ENCODE measurements at regions of chr18 and their contacts with region 1.

Region 1: GRCh38 chr18:37385846-37386778 is 179.5 kb downstream of the CELF4 start:
- DNase-seq: no peak
- H3K4me3 ChIP-seq: no peak overlapping the region
- H3K27ac ChIP-seq: no peak overlapping the region
- H3K4me1 ChIP-seq: peaks cover 0 to 11% (median 8%) of the 10 kb centered on the region in 4 experiments; a peak in 6 of 7 replicates
- H3K27me3 ChIP-seq: no peaks in the 10 kb centered on the region; a peak in 1 of 7 replicates
- CTCF ChIP-seq: peak in 2 of 3 experiments; percentile 33 to 43; a peak in 2 of 4 replicates
- EP300 ChIP-seq: no peak
- POLR2A ChIP-seq: no peak
- RAD21 ChIP-seq: peak; percentile 69 to 77

Region 2: DNA sequence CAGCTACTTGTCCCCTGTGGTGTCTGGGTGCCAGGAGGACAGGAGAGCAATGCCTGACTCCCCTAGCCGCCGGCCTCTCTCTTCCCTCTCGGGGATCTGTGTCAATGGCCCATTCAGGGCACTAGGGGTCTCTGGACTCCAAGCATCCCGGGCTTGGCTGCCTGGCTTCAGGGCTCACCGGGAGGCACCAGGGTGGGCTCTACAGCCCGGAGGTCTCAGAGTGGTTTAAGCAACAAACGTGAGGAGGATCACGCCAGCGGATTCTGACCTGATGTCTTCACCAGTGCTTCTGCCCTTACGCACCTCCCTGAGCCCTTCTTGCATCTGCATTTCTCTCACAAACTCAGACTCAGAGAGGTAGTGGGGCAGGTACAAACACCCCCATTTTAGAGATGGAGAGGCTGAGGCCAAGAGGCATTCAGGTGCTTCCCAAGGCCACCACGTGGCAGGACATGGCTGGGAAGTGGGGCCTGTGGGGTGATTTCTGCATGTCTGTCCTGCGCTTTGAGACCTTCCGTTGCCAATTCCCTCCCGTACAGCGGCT is 63.5 kb before region 1 on chr18:
- CTCF ChIA-PET with region 1: interaction called, 12 read pairs
- POLR2A ChIA-PET with region 1: no interaction called
- DNase-seq: peak; percentile 29 to 85
- H3K4me3 ChIP-seq: no peak overlapping the region
- H3K27ac ChIP-seq: no peak overlapping the region
- H3K4me1 ChIP-seq: peaks cover 0 to 10% (median 5%) of the 10 kb centered on the region in 4 experiments; a peak in 6 of 7 replicates
- H3K27me3 ChIP-seq: no peaks in the 10 kb centered on the region
- CTCF ChIP-seq: peak in 2 of 3 experiments; percentile 83 to 92; a peak in 3 of 4 replicates
- EP300 ChIP-seq: no peak
- POLR2A ChIP-seq: no peak
- RAD21 ChIP-seq: peak; percentile 87 to 92

Region 3: GRCh38 chr18:37355772-37356171 is 30.3 kb before region 1 on chr18:
- CTCF ChIA-PET with region 1: interaction called, 15 read pairs
- POLR2A ChIA-PET with region 1: no interaction called
- DNase-seq: no peak
- H3K4me3 ChIP-seq: no peak overlapping the region
- H3K27ac ChIP-seq: no peak overlapping the region
- H3K4me1 ChIP-seq: peaks cover 2 to 3% (median 2%) of the 10 kb centered on the region in 4 experiments; a peak in 4 of 7 replicates
- H3K27me3 ChIP-seq: peaks cover 0 to 22% (median 16%) of the 10 kb centered on the region in 4 experiments; a peak in 6 of 7 replicates
- CTCF ChIP-seq: no peak
- EP300 ChIP-seq: no peak
- POLR2A ChIP-seq: no peak
- RAD21 ChIP-seq: no peak

Region 4: DNA sequence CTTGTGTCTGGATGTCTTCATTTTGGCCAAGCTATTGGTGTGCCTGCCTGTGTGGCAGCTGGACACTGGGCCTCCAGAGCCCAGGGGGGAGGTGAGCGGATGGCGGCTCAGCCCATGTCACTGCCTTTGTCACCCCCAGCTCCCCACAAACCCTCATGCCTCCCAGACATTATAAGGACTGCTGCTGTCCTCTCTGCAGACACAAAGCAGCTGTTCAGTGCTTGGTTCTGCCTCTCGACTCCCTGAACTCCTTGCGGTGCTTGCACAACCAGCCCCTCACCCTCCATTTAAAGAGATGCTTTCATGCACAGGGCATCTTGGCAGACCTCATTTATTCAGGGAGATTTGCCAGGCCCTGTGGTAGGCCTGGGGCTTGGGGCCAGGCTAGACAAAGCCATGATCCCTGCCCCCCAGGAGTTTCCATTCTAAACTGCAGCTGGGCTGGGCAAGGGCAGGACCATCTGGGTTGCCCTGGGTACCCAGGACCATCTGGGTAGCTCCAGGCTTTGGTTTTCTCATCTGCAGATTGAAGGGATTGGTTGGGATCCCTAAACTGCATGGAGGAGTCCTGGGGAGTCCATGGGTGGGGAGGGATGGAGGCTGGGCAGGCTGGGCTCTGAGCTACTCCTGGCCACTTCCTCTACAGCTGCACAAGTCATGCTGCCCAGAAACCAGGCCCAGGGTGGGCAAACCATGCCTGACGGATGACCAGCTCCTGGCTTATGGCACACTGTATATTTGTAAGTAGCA is 11.0 kb after region 1 on chr18:
- CTCF ChIA-PET with region 1: interaction called, 11 read pairs
- POLR2A ChIA-PET with region 1: no interaction called
- DNase-seq: no peak
- H3K4me3 ChIP-seq: no peak overlapping the region
- H3K27ac ChIP-seq: no peak overlapping the region
- H3K4me1 ChIP-seq: peaks cover 0 to 16% (median 12%) of the 10 kb centered on the region in 4 experiments; a peak in 6 of 7 replicates
- H3K27me3 ChIP-seq: peaks cover 4 to 33% (median 20%) of the 10 kb centered on the region in 4 experiments
- CTCF ChIP-seq: no peak
- EP300 ChIP-seq: no peak
- POLR2A ChIP-seq: no peak
- RAD21 ChIP-seq: no peak

Region 5: DNA sequence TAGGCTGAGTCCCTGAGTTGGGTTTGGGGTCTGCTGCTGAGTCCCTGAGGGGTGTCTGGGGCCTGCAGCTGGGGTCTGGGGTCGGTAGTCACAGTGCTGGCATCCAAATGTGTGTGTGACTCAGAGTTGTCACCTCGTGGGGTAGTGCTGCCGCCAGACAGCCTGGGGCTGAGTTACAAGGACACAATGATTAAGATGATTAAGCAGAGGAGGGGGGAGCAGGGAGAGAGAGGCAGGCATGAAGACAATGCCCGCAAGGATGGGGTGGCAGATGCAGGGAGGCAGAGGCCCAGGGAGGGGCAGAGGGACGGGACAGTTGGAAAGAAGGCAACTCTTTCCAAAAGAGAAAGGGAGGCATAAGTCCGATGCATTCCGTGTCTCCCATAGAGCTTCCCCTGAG is 59.3 kb after region 1 on chr18:
- CTCF ChIA-PET with region 1: interaction called, 31 read pairs
- POLR2A ChIA-PET with region 1: no interaction called
- DNase-seq: no peak
- H3K4me3 ChIP-seq: no peak overlapping the region
- H3K27ac ChIP-seq: no peak overlapping the region
- H3K4me1 ChIP-seq: peaks cover 0 to 16% (median 10%) of the 10 kb centered on the region in 4 experiments; a peak in 6 of 7 replicates
- H3K27me3 ChIP-seq: no peaks in the 10 kb centered on the region
- CTCF ChIP-seq: no peak
- EP300 ChIP-seq: no peak
- POLR2A ChIP-seq: no peak
- RAD21 ChIP-seq: no peak

Region 6: DNA sequence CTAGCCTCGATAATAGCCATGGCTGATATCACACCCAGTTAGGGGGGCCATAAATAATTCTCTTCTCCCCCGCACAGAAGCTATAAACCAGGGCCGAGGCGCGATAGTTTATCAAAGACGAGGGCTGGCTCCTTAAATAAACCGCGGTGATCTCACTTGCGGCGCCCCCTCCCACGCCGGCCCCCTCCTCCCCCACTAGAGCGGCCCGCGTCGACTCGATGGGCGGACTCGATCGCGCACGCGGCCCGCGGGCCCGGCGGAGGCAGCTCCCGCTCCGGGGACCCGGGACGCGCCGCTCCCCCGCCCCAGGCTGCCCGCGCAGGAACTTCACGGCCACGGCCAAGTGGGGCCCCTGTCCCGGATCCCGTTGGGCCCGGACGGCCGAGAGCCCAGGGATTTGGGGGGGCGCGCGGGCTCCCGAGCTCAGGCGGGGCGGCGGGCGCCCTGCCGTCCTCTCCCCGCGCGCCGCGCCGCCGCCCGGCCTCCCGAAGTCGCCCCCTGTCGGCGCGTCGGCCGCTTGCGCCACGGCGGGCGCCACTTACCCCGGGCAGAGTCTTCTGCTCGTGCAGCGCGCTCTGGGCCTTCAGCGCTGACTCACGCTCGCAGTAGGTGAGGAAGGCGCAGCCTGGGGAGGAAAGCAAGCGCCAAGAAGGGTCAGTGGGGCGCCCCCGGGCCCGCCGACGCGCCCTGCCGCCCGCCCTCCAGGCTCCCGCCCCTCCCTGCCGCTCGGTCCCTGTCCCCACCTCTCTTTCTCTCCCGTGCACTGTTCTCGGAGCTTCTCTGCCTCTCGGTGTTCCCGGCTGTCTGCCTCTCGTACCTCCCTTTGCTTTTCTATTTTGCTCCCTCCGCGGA is 99.1 kb after region 1 on chr18:
- CTCF ChIA-PET with region 1: interaction called, 22 read pairs
- POLR2A ChIA-PET with region 1: no interaction called
- DNase-seq: peak; percentile 43 to 77
- H3K4me3 ChIP-seq: peak overlapping the region; percentile 7 to 60 (median 36); a peak in 7 of 8 replicates
- H3K27ac ChIP-seq: no peak overlapping the region
- H3K4me1 ChIP-seq: peaks cover 3 to 33% (median 21%) of the 10 kb centered on the region in 4 experiments
- H3K27me3 ChIP-seq: peaks cover 0 to 34% (median 24%) of the 10 kb centered on the region in 4 experiments; a peak in 6 of 7 replicates
- CTCF ChIP-seq: peak; percentile 57 to 79 (median 66)
- EP300 ChIP-seq: no peak
- POLR2A ChIP-seq: no peak
- RAD21 ChIP-seq: peak in 1 of 2 experiments; percentile 43; a peak in 2 of 4 replicates

Region 7: GRCh38 chr18:37529863-37530262 is 143.8 kb after region 1 on chr18:
- CTCF ChIA-PET with region 1: interaction called, 11 read pairs
- POLR2A ChIA-PET with region 1: no interaction called
- DNase-seq: no peak
- H3K4me3 ChIP-seq: no peak overlapping the region
- H3K27ac ChIP-seq: no peak overlapping the region
- H3K4me1 ChIP-seq: peaks cover 7 to 15% (median 9%) of the 10 kb centered on the region in 4 experiments
- H3K27me3 ChIP-seq: peaks cover 0 to 4% (median under 1%) of the 10 kb centered on the region in 4 experiments; a peak in 5 of 7 replicates
- CTCF ChIP-seq: no peak
- EP300 ChIP-seq: no peak
- POLR2A ChIP-seq: no peak
- RAD21 ChIP-seq: no peak

Measured in H1 (cell line).